Posterior cingulate gyrus (tissue), 11 donors: ENCODE measurements at regions of chr1 and their contacts with region 1.

Region 1: DNA sequence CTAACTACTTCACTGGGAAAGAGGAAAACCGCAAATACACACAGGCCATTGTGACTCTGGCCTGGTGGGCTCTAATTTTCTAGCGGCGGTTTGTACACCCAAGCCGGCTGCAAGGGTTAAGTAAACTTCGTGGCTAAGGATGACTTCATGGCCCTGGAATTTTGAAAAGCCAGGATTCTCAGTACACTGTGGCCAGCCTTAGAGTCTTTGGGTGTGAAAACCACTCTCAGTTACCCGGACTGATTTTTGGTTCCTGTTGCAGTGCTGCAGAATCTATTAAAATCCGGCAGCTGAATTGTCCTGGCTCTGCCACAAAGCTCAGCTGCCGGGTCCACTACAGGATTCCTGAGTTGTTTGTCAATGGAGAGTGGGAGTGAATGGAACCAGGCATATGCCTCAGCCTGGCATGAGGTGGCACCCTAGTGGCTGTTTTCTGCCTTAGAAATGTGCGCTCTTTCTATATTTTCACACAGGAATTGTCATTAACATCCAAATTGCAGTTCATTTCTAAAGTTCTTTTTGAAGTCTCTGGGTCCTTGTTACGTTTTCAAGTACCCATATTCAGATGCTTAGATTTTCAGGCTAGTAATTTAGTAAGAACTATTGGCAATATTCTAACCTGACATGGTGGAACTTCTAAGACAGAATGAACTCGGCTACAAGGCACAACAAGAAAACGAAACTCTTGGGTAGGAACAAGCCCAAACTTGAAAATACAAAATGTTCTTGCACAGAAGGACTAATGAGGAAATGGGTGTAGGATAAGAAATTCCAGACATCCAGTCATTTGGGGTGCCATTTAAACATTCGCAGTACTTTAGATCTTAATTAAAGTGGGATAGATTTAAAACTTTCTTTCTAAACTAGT is 255.9 kb downstream of the NFIA start:
- DNase-seq: peak; percentile 62 to 95 (median 74)

Region 2: GRCh38 chr1:59803458-59804038 is 1534.7 kb before region 1 on chr1:
- intact Hi-C with region 1: no loop called
- DNase-seq: no peak

Region 3: DNA sequence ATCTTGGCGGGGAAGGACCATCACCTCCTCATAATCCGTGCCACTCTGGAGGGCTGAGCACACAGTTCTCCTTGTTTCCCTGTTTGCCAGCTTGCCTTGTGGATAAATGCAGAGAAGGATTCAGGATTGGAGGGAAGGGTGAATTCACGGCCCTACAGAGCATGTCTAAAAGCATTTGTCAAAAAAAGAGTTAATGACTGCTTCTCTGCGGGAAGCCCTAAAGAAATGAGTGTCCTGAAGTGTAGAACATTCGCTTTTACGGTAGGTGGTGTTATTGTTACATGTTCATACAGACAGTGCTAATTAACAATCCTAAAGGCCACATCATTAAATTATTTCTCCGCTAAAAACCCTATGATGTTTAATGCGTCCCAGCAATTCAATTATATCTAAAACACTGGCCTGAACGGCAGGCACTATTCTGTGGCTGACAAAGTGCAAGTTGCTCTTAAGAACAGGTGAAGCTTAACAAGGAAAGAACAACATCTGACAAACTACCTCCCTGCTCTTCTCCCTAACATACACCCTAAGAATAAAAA is 368.2 kb before region 1 on chr1:
- intact Hi-C with region 1: loop called (anchors 2 kb)
- DNase-seq: no peak

Region 4: DNA sequence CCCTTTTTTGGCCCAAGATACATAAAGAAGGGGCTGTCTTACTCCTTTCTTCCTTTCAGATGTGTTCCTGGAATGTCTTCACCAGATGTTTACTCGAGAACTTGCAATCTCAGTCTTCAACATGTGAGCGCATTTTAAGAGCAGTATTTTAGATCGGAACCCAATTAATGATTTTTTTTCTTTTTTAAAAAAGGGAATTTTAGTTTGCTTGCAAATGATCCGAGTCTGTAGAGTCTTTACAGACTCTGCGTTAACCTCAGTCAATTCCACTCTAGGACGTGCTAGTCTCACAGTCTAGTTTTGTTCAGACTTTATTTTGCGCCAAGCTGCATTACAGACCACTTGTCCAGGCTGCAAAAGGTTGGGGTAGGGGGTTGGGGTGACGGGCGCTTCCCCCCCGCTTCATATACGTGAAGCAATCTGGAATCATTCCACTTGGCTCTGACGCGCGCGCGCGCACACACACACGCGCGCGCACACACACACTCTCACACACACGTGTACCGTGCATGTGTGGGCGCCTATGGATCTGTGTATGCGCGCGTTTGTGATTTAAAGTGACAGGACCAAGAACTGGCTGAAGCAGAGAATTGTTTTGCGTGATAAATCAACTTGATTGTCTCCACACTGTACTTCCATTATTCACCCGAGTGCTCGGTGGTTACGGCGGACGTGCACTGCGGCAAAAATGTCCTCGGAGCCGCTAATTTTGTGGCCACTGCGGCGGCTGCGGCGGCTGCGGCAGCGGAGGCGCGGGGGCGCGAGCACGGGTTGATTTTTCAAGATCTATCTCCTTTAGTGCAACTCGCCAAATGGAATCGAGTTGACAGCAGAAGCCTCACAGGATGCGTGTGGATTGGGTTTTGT is 281.4 kb before region 1 on chr1:
- intact Hi-C with region 1: loop called (anchors 2 kb)
- DNase-seq: peak in 9 of 10 donors; percentile 46 to 92 (median 62)

Region 5: DNA sequence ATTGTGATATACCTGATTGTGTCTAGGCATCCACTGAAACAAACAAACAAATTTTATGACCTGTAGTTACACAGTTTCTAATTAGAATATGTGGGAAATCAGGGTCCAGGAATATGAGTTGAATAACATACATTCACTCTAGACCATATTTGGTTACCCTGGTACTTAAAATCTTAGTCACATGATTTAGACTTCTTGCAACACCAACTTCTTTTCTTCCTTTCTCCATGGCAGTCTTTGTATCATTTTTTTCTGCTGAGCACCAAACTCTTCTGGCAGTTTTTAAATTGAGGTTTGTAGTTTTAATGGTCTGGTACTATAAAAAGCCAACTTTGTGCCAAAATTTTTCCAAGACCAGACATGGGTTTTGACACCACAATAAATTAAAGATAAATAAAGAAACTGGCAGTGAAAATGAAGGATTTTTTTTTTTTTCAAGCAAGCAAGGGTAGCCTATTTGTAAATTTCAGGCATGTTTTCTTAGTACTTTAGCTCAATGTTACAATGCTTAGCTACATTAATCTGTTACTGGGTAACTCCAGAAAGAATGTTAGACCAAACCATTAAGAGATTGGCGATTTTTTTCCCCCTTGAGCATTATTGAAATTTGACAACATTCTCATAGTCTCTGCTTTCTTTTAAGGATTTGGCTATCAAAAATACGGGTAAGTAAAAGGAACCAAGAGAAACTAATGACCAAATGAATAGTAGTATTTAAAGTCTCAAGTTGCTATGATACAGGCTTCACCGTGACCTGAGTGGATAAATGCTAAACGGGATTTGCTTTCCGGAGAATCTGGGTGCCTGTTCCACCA is 147.4 kb before region 1 on chr1:
- intact Hi-C with region 1: loop called (anchors 5 kb)
- DNase-seq: no peak

Region 6: GRCh38 chr1:61279570-61279969 is 58.6 kb before region 1 on chr1:
- intact Hi-C with region 1: loop called (anchors 5 kb)
- DNase-seq: peak in 1 of 10 donors; percentile 63

Region 7: GRCh38 chr1:61453111-61453961 is 115.1 kb after region 1 on chr1:
- intact Hi-C with region 1: loop called (anchors 5 kb)
- DNase-seq: peak; percentile 68 to 96 (median 82)